SK-N-SH (cell line): ENCODE measurements at regions of chr15 and their contacts with region 1.

Region 1: DNA sequence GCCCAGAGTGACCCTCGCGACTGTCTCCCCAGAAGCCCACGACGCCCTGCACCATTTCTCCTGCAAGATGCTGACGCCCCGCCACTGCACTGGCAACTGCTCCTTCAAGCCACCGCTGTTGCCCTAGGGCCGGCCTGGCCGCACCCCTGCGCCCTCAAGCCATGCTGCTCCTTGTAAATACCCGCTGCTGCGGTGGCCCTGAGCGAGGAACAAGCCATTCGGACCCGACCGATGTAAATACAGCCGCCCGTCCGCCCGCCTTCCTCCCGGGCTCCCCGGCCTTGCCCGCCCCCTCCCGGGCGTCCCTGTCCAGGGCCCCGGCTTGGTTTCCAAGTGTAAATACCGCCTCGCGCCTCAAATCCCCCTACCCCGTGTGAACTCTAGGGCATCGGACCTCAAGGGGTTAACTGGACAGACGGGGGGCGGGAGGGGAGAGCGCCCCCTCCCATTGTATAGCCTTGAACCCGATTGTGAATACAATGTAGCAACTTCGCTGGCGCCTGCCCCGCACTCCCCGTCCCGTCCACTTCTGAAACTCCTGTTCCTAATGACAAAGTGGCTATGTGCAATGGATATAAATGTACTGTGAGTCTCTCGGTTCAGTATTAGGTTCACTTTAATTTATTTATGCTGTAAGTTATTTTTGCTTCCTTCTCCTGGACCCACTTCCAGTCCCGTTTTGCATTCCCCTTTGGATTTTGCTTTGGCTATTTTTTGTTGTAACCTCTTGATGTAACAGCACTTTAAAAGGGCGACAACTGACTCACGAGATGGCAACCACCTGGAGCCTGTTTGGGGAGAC is 5.9 kb downstream of the RNU6-1 start:
- DNase-seq: peak; percentile 92
- H3K4me3 ChIP-seq: peak overlapping the region; percentile 27 to 44
- H3K27ac ChIP-seq: no peak overlapping the region
- H3K4me1 ChIP-seq: peaks cover 0 to 14% of the 10 kb centered on the region in 2 experiments; a peak in 1 of 4 replicates
- H3K27me3 ChIP-seq: no peaks in the 10 kb centered on the region
- CTCF ChIP-seq: peak; percentile 61
- EP300 ChIP-seq: no peak
- RAD21 ChIP-seq: peak; percentile 71

Region 2: DNA sequence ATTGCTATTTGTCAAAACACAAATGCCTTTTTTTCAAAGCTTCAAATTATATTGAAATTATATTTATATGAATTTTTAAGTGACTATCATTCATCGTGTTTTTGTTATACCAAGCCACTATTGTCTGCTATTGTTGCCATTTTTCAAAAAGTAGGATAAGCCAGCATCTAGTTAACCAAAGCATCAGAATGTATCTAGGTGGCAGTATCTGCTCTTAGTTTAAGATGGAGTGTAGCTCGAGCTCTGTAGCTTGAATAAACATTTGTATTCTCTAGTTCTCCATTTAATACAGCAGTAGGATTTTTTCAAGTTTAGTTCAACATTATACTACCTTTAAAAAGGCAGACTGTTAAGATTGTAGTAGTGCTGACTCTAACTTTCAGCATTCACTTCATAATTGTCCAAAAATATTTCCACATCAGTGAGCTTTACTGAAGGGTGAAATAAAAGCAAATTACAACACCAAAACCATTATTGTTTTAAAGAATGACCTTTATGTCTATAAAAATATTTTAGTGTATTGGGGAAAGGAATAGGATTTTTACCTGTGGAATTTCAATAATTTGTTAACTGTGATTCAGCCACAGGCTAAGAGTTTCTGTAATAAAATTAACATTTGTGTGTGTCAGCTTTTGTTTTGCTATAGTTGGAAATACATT is 332.6 kb before region 1 on chr15:
- CTCF ChIA-PET with region 1: interaction called, 14 read pairs
- POLR2A ChIA-PET with region 1: no interaction called
- DNase-seq: peak; percentile 38
- H3K4me3 ChIP-seq: no peak overlapping the region
- H3K27ac ChIP-seq: no peak overlapping the region
- H3K4me1 ChIP-seq: peaks cover 0 to 3% of the 10 kb centered on the region in 2 experiments; a peak in 2 of 4 replicates
- H3K27me3 ChIP-seq: no peaks in the 10 kb centered on the region
- CTCF ChIP-seq: peak; percentile 58
- EP300 ChIP-seq: no peak
- RAD21 ChIP-seq: peak; percentile 76

Region 3: GRCh38 chr15:67855842-67856241 is 21.9 kb after region 1 on chr15:
- CTCF ChIA-PET with region 1: no interaction called
- POLR2A ChIA-PET with region 1: no interaction called
- DNase-seq: no peak
- H3K4me3 ChIP-seq: no peak overlapping the region
- H3K27ac ChIP-seq: no peak overlapping the region
- H3K4me1 ChIP-seq: peaks cover 0 to 7% of the 10 kb centered on the region in 2 experiments; a peak in 1 of 4 replicates
- H3K27me3 ChIP-seq: no peaks in the 10 kb centered on the region
- CTCF ChIP-seq: no peak
- EP300 ChIP-seq: no peak
- RAD21 ChIP-seq: no peak